Natural killer cell (primary cell): ENCODE measurements at regions of chr17 and their contacts with region 1.

Region 1: DNA sequence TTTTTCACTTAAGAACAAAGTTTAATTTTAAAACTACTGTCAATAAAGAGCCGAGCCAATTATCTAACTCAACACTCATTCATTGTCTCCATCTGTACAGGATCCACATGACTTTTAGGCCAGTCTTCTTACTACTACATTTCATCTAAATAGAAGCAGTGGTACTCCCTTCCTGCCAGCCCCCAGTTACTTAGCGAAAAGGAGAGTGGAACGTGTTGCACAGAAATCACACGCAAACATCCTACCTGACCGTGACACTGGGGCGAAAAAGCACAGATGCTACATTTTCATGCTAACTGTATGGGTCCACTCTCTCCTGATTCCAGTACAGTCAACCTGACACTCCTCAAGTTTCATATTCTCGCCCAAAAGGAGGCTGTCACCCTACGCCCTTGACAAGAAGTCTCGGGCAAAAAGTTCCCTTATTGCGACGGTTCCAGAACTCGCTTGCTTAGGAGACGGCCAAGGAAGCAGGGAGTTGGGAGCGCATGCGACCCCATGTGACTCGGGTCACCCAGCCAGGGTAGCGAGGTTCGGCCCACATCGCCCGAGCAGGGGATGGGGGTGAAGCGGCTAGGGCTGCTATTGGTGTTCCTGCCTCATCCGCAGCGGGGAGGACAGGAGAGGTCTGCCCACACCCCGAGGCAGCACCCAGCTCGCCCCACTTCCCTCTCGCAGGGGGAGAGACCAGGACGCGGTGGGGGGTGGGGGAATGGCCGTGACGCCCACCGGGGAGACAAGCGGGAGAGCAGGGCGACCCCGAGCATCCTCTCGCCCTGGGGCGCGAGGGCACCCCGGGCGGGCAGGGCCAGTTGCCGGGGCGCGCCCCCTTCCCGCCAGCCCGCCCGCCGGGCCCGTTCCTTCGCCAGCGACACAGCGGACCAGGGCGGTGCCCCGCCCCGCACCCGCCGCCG is 935 bp downstream of the GNA13 start:
- DNase-seq: peak; percentile 52 to 64
- ATAC-seq: peak; percentile 8 to 56 (median 27)
- H3K4me3 ChIP-seq: peak overlapping the region; percentile 100
- H3K4me3 Mint-ChIP-seq: peak overlapping the region; percentile 97
- H3K27ac ChIP-seq: peak overlapping the region; percentile 100
- H3K27ac Mint-ChIP-seq: peak overlapping the region; percentile 95 to 98
- H3K4me1 ChIP-seq: peaks cover 18% of the 10 kb centered on the region
- H3K4me1 Mint-ChIP-seq: peaks cover 39 to 61% of the 10 kb centered on the region in 2 donors
- H3K27me3 ChIP-seq: no peaks in the 10 kb centered on the region
- H3K27me3 Mint-ChIP-seq: no peaks in the 10 kb centered on the region
- CTCF ChIP-seq: no peak

Region 2: DNA sequence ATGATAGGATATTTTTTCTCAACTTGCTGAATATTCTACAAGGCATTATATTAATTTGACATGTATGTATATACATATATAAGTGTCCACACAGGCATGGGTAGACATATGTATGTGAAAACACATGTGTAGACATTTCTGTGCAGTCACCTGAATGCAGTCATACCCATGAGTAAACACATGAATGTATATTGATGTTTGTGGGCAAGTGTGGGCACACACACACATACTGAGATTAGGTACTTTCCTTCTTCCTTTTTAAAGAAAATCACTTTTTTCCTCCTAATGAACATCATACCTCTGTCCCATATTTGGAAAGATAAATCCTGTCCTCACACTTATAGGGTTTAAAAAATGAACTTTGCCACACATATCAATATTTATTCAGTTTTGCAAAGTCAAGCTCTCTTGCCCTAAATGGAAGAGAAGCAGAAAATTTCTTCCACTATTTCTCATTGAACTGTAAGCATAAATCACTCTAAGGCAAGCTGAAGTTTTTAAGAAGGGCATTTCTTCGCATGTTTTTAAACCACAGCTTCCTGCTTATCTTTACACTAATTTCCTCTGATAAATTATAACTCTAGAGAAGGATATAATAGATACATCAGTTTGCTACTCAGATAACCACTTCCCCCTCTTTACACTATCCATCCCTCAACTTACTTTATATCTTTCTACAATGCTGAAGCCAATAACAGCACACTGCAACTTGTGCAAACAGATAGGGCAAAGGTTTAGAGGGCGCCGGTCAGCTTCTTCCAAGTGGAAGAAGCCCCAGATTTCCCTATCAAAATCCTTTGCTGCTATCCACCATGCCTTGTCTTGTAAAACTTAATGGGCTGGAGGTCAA is 86.7 kb before region 1 on chr17:
- intact Hi-C with region 1: loop called (anchors 1 kb)
- DNase-seq: peak in 1 of 2 donors; percentile 63
- ATAC-seq: peak; percentile 13 to 29 (median 25)
- H3K4me3 ChIP-seq: no peak overlapping the region
- H3K4me3 Mint-ChIP-seq: peak overlapping the region; percentile 90
- H3K27ac ChIP-seq: peak overlapping the region; percentile 97
- H3K27ac Mint-ChIP-seq: peak overlapping the region; percentile 97 to 99
- H3K4me1 ChIP-seq: peaks cover 45% of the 10 kb centered on the region
- H3K4me1 Mint-ChIP-seq: peaks cover 48 to 53% of the 10 kb centered on the region in 2 donors
- H3K27me3 ChIP-seq: no peaks in the 10 kb centered on the region
- H3K27me3 Mint-ChIP-seq: no peaks in the 10 kb centered on the region
- CTCF ChIP-seq: no peak

Region 3: DNA sequence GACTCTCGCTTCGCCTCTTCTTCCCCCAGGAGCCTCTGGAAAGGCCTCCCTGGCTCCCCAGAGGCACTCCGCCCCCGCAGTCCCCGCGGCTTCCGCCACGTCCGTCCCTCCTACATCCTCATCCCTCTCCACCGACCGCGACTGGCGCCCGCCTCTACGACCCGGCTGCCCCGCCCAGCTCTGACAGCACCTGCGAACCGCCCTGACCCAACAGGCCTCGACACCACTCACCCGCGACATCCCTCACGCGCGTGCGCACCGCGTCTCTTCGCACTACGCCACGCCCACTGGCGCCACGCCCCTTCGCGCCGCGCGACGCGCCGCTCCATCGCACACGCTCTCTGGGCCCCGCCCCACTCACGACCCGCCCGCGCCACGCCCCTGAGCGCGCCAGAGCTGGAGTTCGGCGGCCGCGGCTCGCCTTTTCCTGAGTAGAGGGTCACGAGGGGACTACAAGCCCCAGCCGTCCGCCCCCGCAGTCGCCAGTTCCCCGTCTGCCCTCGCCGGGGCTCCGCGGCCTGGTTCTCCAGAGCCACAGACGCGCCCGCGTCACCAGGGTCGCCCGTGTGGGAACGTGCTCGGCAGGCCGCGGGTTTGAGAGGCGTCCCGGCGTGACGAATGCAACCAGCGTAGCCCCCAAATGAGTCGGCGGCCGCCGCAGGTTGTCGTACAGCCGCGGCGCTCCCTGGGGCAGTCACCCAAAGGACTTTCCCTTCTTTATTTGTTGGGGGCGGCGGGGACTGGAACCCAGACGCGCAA is 80.1 kb before region 1 on chr17:
- intact Hi-C with region 1: loop called (anchors 2 kb)
- DNase-seq: peak; percentile 98 to 100
- ATAC-seq: peak; percentile 75 to 93 (median 77)
- H3K4me3 ChIP-seq: peak overlapping the region; percentile 64
- H3K4me3 Mint-ChIP-seq: peak overlapping the region; percentile 92
- H3K27ac ChIP-seq: peak overlapping the region; percentile 91
- H3K27ac Mint-ChIP-seq: peak overlapping the region; percentile 99
- H3K4me1 ChIP-seq: peaks cover 29% of the 10 kb centered on the region
- H3K4me1 Mint-ChIP-seq: peaks cover 35 to 36% of the 10 kb centered on the region in 2 donors
- H3K27me3 ChIP-seq: no peaks in the 10 kb centered on the region
- H3K27me3 Mint-ChIP-seq: no peaks in the 10 kb centered on the region
- CTCF ChIP-seq: no peak

Region 4: GRCh38 chr17:64984851-64985521 is 70.6 kb before region 1 on chr17:
- intact Hi-C with region 1: loop called (anchors 5 kb)
- DNase-seq: peak; percentile 20 to 85
- ATAC-seq: peak in 1 of 3 donors; percentile 6
- H3K4me3 ChIP-seq: no peak overlapping the region
- H3K4me3 Mint-ChIP-seq: peak overlapping the region; percentile 82
- H3K27ac ChIP-seq: peak overlapping the region; percentile 94
- H3K27ac Mint-ChIP-seq: peak overlapping the region; percentile 99 to 100
- H3K4me1 ChIP-seq: peaks cover 42% of the 10 kb centered on the region
- H3K4me1 Mint-ChIP-seq: peaks cover 37 to 44% of the 10 kb centered on the region in 2 donors
- H3K27me3 ChIP-seq: no peaks in the 10 kb centered on the region
- H3K27me3 Mint-ChIP-seq: no peaks in the 10 kb centered on the region
- CTCF ChIP-seq: no peak

Region 5: GRCh38 chr17:65027305-65027704 is 28.3 kb before region 1 on chr17:
- intact Hi-C with region 1: loop called (anchors 2 kb)
- DNase-seq: peak; percentile 48 to 75
- ATAC-seq: peak; percentile 69 to 77 (median 69)
- H3K4me3 ChIP-seq: no peak overlapping the region
- H3K4me3 Mint-ChIP-seq: peak overlapping the region; percentile 59
- H3K27ac ChIP-seq: peak overlapping the region; percentile 60
- H3K27ac Mint-ChIP-seq: peak overlapping the region; percentile 68 to 86
- H3K4me1 ChIP-seq: peaks cover 36% of the 10 kb centered on the region
- H3K4me1 Mint-ChIP-seq: peaks cover 78 to 81% of the 10 kb centered on the region in 2 donors
- H3K27me3 ChIP-seq: no peaks in the 10 kb centered on the region
- H3K27me3 Mint-ChIP-seq: no peaks in the 10 kb centered on the region
- CTCF ChIP-seq: peak; percentile 64

Region 6: GRCh38 chr17:65039336-65039988 is 16.1 kb before region 1 on chr17:
- intact Hi-C with region 1: loop called (anchors 2 kb)
- DNase-seq: peak in 1 of 2 donors; percentile 90
- ATAC-seq: peak; percentile 72 to 90 (median 78)
- H3K4me3 ChIP-seq: no peak overlapping the region
- H3K4me3 Mint-ChIP-seq: peak overlapping the region; percentile 79
- H3K27ac ChIP-seq: peak overlapping the region; percentile 78
- H3K27ac Mint-ChIP-seq: peak overlapping the region; percentile 92 to 97
- H3K4me1 ChIP-seq: peaks cover 56% of the 10 kb centered on the region
- H3K4me1 Mint-ChIP-seq: peaks cover 72 to 75% of the 10 kb centered on the region in 2 donors
- H3K27me3 ChIP-seq: no peaks in the 10 kb centered on the region
- H3K27me3 Mint-ChIP-seq: no peaks in the 10 kb centered on the region
- CTCF ChIP-seq: no peak

Region 7: GRCh38 chr17:65100316-65101140 is 44.9 kb after region 1 on chr17:
- intact Hi-C with region 1: loop called (anchors 1 kb)
- DNase-seq: peak; percentile 86 to 92
- ATAC-seq: peak; percentile 81 to 94 (median 87)
- H3K4me3 ChIP-seq: peak overlapping the region; percentile 41
- H3K4me3 Mint-ChIP-seq: peak overlapping the region; percentile 87
- H3K27ac ChIP-seq: peak overlapping the region; percentile 60
- H3K27ac Mint-ChIP-seq: peak overlapping the region; percentile 93
- H3K4me1 ChIP-seq: peaks cover 15% of the 10 kb centered on the region
- H3K4me1 Mint-ChIP-seq: peaks cover 19 to 22% of the 10 kb centered on the region in 2 donors
- H3K27me3 ChIP-seq: no peaks in the 10 kb centered on the region
- H3K27me3 Mint-ChIP-seq: no peaks in the 10 kb centered on the region
- CTCF ChIP-seq: peak; percentile 64